GM12878 (cell line): ENCODE measurements at regions of chr22 and their contacts with region 1.

Region 1: DNA sequence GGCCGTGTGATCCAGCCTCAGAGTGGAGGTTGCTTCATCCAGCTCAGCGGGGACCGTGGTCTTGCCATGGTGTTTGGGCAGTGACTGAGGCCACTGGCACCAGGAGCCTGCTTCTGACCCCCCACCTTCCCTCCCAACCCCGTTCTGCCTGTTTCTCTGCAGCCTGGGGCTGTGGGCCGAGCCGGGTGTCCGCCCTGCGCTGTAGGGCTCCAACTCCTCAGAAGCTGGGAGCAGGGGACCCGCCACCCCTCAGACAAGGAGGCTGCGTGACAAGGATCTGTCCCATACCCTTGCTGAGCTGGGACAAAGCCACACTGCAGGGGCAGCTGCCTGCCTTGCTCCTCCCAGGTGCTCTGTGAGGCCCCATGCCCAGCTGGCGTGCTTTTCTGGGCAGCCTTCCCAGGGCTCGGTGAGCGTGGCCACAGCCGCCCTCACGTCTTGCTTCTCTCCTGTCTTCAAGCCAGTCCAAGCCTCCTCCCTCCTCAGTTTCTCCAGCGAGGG is 11.7 kb upstream of the ARFGAP3 start:
- DNase-seq: no peak
- ATAC-seq: no peak
- H3K4me3 ChIP-seq: no peak overlapping the region
- H3K27ac ChIP-seq: no peak overlapping the region
- H3K4me1 ChIP-seq: no peaks in the 10 kb centered on the region
- H3K27me3 ChIP-seq: no peaks in the 10 kb centered on the region
- CTCF ChIP-seq: no peak
- EP300 ChIP-seq: no peak
- POLR2A ChIP-seq: peak; percentile 23; the same call in 1 of the 2 replicates
- RAD21 ChIP-seq: no peak

Region 2: GRCh38 chr22:41832553-41833368 is 1036.0 kb before region 1 on chr22 and contains the start of gene SREBF2:
- CTCF ChIA-PET with region 1: no interaction called
- POLR2A ChIA-PET with region 1: no interaction called
- RAD21 ChIA-PET with region 1: no interaction called
- SMC1A ChIA-PET with region 1: no interaction called
- in situ Hi-C with region 1: no loop called
- intact Hi-C with region 1: no loop called
- DNase-seq: peak; percentile 99
- ATAC-seq: peak; percentile 92
- H3K4me3 ChIP-seq: peak within 1 kb of the TSS; percentile 92
- H3K27ac ChIP-seq: peak within 1 kb of the TSS; percentile 95
- H3K4me1 ChIP-seq: peaks cover 12% of the 10 kb centered on the region
- H3K27me3 ChIP-seq: no peaks in the 10 kb centered on the region
- CTCF ChIP-seq: 0 out of 6 replicates have a peak, but pooled peaks of 1 of the 3 experiments have one; percentile 1
- EP300 ChIP-seq: peak; percentile 64 to 75
- POLR2A ChIP-seq: peak; percentile 94
- RAD21 ChIP-seq: no peak
- polyA plus RNA-seq, gene SREBF2: 2.4 to 3.6 TPM

Region 3: DNA sequence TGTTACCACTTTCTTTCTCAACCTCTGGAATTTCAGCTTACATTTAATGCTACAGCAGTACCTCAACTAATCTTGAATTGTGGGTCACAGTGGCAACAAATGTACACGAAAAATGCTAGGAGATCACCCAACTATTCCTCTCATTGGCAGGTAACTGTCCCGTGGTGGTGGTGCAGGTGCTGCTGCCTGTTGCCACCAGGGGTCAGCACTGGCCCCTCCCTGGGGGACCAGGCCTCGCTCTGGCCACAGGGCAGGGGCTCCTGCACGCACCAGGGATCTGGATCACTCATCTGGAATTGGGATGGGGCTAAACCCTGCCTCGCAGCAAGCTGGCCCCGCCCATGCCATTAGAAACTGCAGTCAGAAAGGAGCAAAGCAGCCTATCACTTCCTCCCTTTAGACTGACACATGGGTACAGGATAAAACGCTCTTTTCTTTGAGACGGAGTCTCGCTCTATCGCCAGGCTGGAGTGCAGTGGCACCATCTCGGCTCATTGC is 247.2 kb before region 1 on chr22:
- CTCF ChIA-PET with region 1: interaction called, 16 read pairs
- POLR2A ChIA-PET with region 1: no interaction called
- RAD21 ChIA-PET with region 1: interaction called, 6 read pairs
- SMC1A ChIA-PET with region 1: interaction called, 4 read pairs
- in situ Hi-C with region 1: no loop called
- intact Hi-C with region 1: no loop called
- DNase-seq: no peak
- ATAC-seq: peak; percentile 93
- H3K4me3 ChIP-seq: no peak overlapping the region
- H3K27ac ChIP-seq: no peak overlapping the region
- H3K4me1 ChIP-seq: peaks cover 8% of the 10 kb centered on the region
- H3K27me3 ChIP-seq: no peaks in the 10 kb centered on the region
- CTCF ChIP-seq: peak; percentile 86 to 97 (median 95)
- EP300 ChIP-seq: no peak
- POLR2A ChIP-seq: peak; percentile 34
- RAD21 ChIP-seq: peak; percentile 61

Region 4: DNA sequence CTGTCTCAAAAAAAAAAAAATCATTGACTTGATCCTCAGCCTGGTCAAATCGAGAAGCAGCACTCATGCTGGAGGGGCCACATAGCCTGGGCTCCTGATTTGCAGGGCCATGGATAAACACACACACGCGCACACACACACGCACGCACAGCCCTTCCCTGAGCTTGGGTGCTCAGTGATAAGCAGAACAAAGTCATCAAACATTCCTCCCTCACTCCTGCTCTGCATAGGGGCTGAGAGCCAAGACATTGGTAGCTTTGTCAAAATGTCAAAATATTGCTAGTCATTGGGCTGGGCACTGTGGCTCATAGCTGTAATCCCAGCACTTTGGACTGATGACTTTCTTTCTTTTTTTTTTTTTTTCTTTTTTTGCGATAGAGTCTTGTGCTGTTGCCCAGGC is 114.1 kb before region 1 on chr22:
- CTCF ChIA-PET with region 1: no interaction called
- POLR2A ChIA-PET with region 1: no interaction called
- RAD21 ChIA-PET with region 1: no interaction called
- SMC1A ChIA-PET with region 1: no interaction called
- in situ Hi-C with region 1: no loop called
- intact Hi-C with region 1: no loop called
- DNase-seq: no peak
- ATAC-seq: no peak
- H3K4me3 ChIP-seq: no peak overlapping the region
- H3K27ac ChIP-seq: no peak overlapping the region
- H3K4me1 ChIP-seq: peaks cover 22% of the 10 kb centered on the region
- H3K27me3 ChIP-seq: no peaks in the 10 kb centered on the region
- CTCF ChIP-seq: no peak
- EP300 ChIP-seq: no peak
- POLR2A ChIP-seq: no peak
- RAD21 ChIP-seq: no peak

Region 5: DNA sequence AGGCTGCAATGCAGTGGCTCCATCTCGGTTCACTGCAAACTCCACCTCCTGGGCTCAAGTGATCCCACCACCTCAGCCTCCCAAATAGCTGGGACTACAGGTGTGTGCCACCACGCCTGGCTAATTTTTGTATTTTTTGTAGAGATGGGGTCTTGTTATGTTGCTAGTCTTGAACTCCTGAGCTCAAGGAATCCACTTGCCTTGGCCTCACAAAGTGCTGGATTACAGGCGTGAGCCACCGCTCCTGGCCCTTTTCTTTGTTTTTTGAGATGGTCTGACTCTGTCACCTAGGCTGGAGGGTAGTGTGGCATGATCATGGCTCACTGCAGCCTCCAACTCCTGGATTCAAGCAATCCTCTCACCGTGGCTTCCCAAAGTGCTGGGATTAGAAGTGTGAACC is 32.8 kb before region 1 on chr22:
- CTCF ChIA-PET with region 1: interaction called, 21 read pairs
- POLR2A ChIA-PET with region 1: no interaction called
- RAD21 ChIA-PET with region 1: interaction called, 10 read pairs
- SMC1A ChIA-PET with region 1: interaction called, 5 read pairs
- in situ Hi-C with region 1: no loop called
- intact Hi-C with region 1: no loop called
- DNase-seq: no peak
- ATAC-seq: no peak
- H3K4me3 ChIP-seq: no peak overlapping the region
- H3K27ac ChIP-seq: no peak overlapping the region
- H3K4me1 ChIP-seq: peaks cover 27% of the 10 kb centered on the region
- H3K27me3 ChIP-seq: no peaks in the 10 kb centered on the region
- CTCF ChIP-seq: no peak
- EP300 ChIP-seq: no peak
- POLR2A ChIP-seq: no peak
- RAD21 ChIP-seq: no peak

Region 6: GRCh38 chr22:42895087-42895486 is 26.3 kb after region 1 on chr22:
- CTCF ChIA-PET with region 1: interaction called, 13 read pairs
- POLR2A ChIA-PET with region 1: no interaction called
- RAD21 ChIA-PET with region 1: interaction called, 10 read pairs
- SMC1A ChIA-PET with region 1: interaction called, 13 read pairs
- in situ Hi-C with region 1: no loop called
- intact Hi-C with region 1: no loop called
- DNase-seq: peak; percentile 76
- ATAC-seq: peak; percentile 81
- H3K4me3 ChIP-seq: no peak overlapping the region
- H3K27ac ChIP-seq: peak overlapping the region; percentile 69
- H3K4me1 ChIP-seq: peaks cover 68% of the 10 kb centered on the region
- H3K27me3 ChIP-seq: no peaks in the 10 kb centered on the region
- CTCF ChIP-seq: no peak
- EP300 ChIP-seq: no peak
- POLR2A ChIP-seq: no peak
- RAD21 ChIP-seq: no peak

Region 7: DNA sequence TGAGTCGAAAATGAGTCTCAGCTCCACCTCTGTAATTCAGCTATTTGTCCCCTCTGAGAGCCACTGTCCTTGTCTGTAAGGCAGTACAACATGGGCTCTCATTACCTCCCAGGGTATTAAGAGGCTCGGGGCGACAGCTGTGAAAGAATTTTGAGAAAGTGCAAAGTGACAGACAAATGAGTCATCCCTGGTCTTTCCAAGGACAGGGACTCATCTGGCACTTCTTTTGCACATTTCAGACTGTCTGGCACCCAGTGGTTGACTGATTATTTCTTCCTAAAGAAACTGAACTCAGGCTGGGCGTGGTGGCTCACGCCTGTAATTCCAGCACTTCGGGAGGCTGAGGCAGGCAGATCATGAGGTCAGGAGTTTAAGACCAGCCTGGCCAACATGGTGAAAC is 50.4 kb after region 1 on chr22:
- CTCF ChIA-PET with region 1: interaction called, 16 read pairs
- POLR2A ChIA-PET with region 1: no interaction called
- RAD21 ChIA-PET with region 1: interaction called, 6 read pairs
- SMC1A ChIA-PET with region 1: interaction called, 9 read pairs
- in situ Hi-C with region 1: no loop called
- intact Hi-C with region 1: no loop called
- DNase-seq: no peak
- ATAC-seq: peak; percentile 36; the same call in 2 of the 3 replicates
- H3K4me3 ChIP-seq: no peak overlapping the region
- H3K27ac ChIP-seq: peak overlapping the region; percentile 33; the same call in 1 of the 2 replicates
- H3K4me1 ChIP-seq: no peaks in the 10 kb centered on the region; the same call in 1 of the 2 replicates
- H3K27me3 ChIP-seq: no peaks in the 10 kb centered on the region
- CTCF ChIP-seq: no peak
- EP300 ChIP-seq: no peak
- POLR2A ChIP-seq: no peak
- RAD21 ChIP-seq: no peak

Region 8: GRCh38 chr22:43014869-43015676 is 146.3 kb after region 1 on chr22 and contains the start of gene PACSIN2:
- CTCF ChIA-PET with region 1: interaction called, 20 read pairs
- POLR2A ChIA-PET with region 1: no interaction called
- RAD21 ChIA-PET with region 1: interaction called, 17 read pairs
- SMC1A ChIA-PET with region 1: interaction called, 4 read pairs
- in situ Hi-C with region 1: no loop called
- intact Hi-C with region 1: no loop called
- DNase-seq: peak; percentile 82
- ATAC-seq: peak; percentile 98
- H3K4me3 ChIP-seq: peak within 1 kb of the TSS; percentile 97
- H3K27ac ChIP-seq: peak within 1 kb of the TSS; percentile 68
- H3K4me1 ChIP-seq: no peaks in the 10 kb centered on the region
- H3K27me3 ChIP-seq: no peaks in the 10 kb centered on the region
- CTCF ChIP-seq: 0 out of 6 replicates have a peak, but pooled peaks of 1 of the 3 experiments have one; percentile 0
- EP300 ChIP-seq: no peak
- POLR2A ChIP-seq: peak; percentile 99
- RAD21 ChIP-seq: no peak
- polyA plus RNA-seq, gene PACSIN2: 0.93 to 1.6 TPM